Kidney (tissue), 22 donors: ENCODE measurements at regions of chr1 and their contacts with region 1.

Region 1: DNA sequence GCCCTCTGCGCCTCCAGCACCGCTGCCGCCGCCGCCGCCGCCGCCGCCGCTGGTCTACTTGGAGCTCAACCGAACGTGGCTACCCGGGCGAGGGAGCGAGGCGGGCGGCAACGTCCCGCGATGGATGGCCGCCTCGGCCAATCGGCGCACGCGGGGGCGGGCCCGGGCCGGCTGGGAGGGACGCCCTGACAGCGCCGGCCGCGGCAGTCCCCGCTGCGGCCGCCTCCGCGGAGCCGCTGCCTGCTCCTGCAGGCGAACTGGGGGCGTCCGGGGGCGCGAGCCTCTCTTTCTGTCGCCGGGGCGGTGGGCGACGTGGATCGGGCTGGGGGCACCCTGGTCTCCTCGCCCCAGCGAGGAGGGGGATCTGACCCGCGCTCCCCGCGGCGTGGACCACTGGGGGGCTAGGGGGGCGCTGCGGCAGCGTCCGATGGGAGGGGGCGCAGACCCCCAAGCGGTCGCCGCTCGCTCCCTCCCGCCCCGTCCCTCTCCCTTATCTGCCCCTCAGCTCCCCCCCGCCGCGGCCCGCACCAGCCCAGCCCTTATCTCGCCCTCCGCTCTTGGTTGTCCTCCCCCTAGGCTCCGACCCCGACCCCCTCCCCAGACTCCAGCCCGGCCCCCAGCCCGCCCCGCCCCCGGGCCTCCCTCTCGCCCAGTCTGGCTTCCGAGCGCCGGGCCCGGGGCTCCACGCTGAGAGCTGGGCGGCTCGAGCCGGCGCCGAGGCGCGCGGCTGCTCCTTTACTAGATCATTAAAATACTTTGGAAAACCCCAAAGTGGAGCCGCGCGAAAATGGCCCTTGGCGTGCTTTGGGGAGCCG is at the start of gene SSBP3:
- DNase-seq: peak; percentile 95 to 98 (median 96)
- H3K4me3 ChIP-seq: peak within 1 kb of the TSS; percentile 78 to 85 (median 82)
- H3K27ac ChIP-seq: peak within 1 kb of the TSS; percentile 95 to 96
- H3K4me1 ChIP-seq: peaks cover 8 to 38% (median 14%) of the 10 kb centered on the region in 3 donors
- H3K27me3 ChIP-seq: no peaks in the 10 kb centered on the region
- CTCF ChIP-seq: no peak
- total RNA-seq, gene SSBP3: 49.6 TPM

Region 2: GRCh38 chr1:54268762-54269297 is 137.7 kb before region 1 on chr1:
- intact Hi-C with region 1: loop called (anchors 10 kb)
- DNase-seq: no peak
- H3K4me3 ChIP-seq: no peak overlapping the region
- H3K27ac ChIP-seq: peak overlapping the region in 1 of 2 donors; percentile 32
- H3K4me1 ChIP-seq: peaks cover 3 to 33% (median 17%) of the 10 kb centered on the region in 3 donors
- H3K27me3 ChIP-seq: no peaks in the 10 kb centered on the region
- CTCF ChIP-seq: no peak

Region 3: GRCh38 chr1:54488779-54489626 is 82.5 kb after region 1 on chr1:
- intact Hi-C with region 1: loop called (anchors 5 kb)
- DNase-seq: peak; percentile 93 to 97 (median 95)
- H3K4me3 ChIP-seq: peak overlapping the region; percentile 48 to 78 (median 69)
- H3K27ac ChIP-seq: peak overlapping the region; percentile 94 to 95
- H3K4me1 ChIP-seq: peaks cover 5 to 12% (median 10%) of the 10 kb centered on the region in 3 donors
- H3K27me3 ChIP-seq: no peaks in the 10 kb centered on the region
- CTCF ChIP-seq: peak; percentile 87